RWPE1 (cell line): ENCODE measurements at regions of chr10 and their contacts with region 1.

Region 1: GRCh38 chr10:72738486-72738885 is 46.5 kb downstream of the MCU start:
- DNase-seq: no peak
- H3K27ac ChIP-seq: no peak overlapping the region
- CTCF ChIP-seq: no peak

Region 2: DNA sequence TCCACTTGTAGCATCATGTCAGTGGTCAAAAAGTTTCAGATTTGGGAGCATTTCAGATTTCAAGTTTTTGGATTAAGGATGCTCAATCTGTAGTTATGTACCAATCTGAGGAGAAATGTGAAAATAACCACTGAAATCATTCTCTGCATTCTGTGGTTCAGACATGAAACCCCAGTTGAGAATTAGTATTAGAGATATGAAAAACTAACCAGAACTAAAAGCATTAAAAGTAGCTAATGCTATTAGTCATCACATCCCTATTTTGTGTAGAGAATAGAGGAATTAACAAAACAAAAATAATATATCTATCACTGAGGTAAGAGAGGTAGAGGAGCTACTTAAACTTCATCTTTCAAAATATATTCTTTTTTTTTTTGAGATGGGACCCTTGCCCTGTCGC is 140.6 kb before region 1 on chr10:
- CTCF ChIA-PET with region 1: no interaction called
- POLR2A ChIA-PET with region 1: no interaction called
- DNase-seq: no peak
- H3K27ac ChIP-seq: no peak overlapping the region
- CTCF ChIP-seq: no peak

Region 3: DNA sequence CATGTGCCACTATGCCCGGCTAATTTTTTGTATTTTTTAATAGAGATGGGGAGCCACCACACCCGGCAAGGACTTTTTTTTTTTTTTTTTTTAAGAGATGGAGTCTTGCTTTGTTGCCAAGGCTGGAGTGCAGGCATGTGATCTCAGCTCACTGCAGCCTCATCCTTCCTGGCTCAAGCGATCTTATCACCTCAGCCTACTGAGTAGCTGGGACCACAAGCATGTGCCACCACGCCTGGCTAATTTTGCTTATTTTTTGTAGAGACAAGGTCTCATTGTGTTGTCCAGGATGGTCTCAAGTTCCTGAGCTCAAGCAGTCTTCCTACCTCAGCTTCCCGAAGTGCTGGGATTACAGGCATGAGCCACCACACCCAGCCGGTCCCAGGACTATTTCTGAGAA is 55.9 kb before region 1 on chr10:
- CTCF ChIA-PET with region 1: no interaction called
- POLR2A ChIA-PET with region 1: interaction called, 12 read pairs
- DNase-seq: no peak
- H3K27ac ChIP-seq: no peak overlapping the region
- CTCF ChIP-seq: no peak